ENCODE measurements at regions of chr3 and their contacts with region 1.

Region 1: GRCh38 chr3:14678015-14678503 is 3.1 kb downstream of the C3orf20 start:
- DNase-seq: no peak
- ATAC-seq: no peak
- H3K4me3 ChIP-seq: no peak overlapping the region
- H3K27ac ChIP-seq: no peak overlapping the region
- H3K4me1 ChIP-seq: no peaks in the 10 kb centered on the region
- H3K27me3 ChIP-seq: no peaks in the 10 kb centered on the region
- CTCF ChIP-seq: no peak

Region 2: DNA sequence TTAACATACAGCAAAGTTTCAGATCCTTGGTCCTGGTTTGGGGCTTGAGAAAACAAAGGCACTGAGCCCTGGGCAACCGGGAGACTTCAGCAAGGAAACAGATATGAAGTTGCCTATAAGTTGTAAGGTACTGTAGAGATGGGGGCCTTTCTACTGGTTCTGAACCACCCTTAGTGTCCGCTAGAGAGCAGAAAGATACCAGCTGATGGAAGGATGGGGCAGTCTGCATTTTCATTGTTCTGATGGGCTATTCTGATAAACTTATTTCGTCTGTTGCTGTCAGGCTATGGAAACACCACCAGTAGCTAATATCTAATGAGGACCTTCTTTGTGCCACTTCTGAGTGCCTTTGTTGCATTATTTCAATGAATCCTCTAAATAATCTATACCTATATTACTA is 179.4 kb after region 1 on chr3:
- CTCF ChIA-PET with region 1: interaction called, 13 read pairs
- POLR2A ChIA-PET with region 1: no interaction called
- in situ Hi-C with region 1: no loop called
- intact Hi-C with region 1: no loop called
- DNase-seq: no peak
- ATAC-seq: peak; percentile 75; the same call in 1 of the 2 replicates
- H3K4me3 ChIP-seq: no peak overlapping the region
- H3K27ac ChIP-seq: no peak overlapping the region
- H3K4me1 ChIP-seq: no peaks in the 10 kb centered on the region
- H3K27me3 ChIP-seq: no peaks in the 10 kb centered on the region
- CTCF ChIP-seq: peak; percentile 42

Measured in Panc1 (cell line).